Spleen (tissue), 13 donors: ENCODE measurements at regions of chr22 and their contacts with region 1.

Region 1: DNA sequence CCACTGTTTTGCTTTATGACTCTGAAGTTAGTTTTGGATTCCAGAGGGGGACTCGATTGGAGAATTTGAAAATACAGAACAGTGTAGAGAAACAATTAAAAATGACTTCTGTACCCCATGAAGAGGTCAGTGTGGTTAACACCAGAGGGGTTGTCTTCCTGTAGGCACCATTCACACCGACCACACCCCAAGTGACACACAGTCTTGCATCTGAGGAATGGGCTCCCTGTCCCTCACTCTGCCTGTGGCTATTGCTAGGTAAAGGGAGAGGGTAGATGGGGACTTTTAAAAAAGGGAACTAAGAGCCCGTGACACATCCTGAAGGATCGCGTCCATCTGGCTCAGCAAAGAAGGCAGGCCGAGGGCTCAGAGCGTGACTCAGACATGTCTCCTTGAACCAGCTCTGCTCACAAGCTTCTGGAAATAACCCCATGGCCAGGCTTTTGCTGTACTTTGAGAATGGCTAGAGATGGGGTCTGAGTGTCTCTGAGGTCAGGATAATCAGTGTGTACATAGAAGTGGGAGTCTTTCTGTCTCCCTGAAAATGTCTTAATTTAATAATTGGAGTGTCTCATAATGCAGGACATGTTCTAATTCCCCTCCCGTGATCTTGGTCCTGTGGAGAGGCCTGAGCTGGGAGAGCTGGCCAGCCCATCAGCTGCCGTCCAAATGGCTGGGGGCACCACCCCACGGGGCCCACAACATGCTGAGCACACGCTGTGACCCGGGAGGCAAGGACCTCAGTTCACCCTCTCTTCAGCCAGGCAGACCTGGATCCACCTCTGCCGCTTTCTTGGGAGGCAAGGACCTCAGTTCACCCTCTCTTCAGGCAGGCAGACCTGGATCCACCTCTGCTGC is 39.3 kb downstream of the SGSM1 start:
- DNase-seq: peak; percentile 49
- H3K4me3 ChIP-seq: no peak overlapping the region
- H3K27ac ChIP-seq: no peak overlapping the region
- H3K4me1 ChIP-seq: peaks cover 0 to 8% (median 0%) of the 10 kb centered on the region in 6 donors
- H3K27me3 ChIP-seq: peaks cover 0 to 4% (median 0%) of the 10 kb centered on the region in 7 donors
- CTCF ChIP-seq: no peak
- POLR2A ChIP-seq: no peak

Region 2: DNA sequence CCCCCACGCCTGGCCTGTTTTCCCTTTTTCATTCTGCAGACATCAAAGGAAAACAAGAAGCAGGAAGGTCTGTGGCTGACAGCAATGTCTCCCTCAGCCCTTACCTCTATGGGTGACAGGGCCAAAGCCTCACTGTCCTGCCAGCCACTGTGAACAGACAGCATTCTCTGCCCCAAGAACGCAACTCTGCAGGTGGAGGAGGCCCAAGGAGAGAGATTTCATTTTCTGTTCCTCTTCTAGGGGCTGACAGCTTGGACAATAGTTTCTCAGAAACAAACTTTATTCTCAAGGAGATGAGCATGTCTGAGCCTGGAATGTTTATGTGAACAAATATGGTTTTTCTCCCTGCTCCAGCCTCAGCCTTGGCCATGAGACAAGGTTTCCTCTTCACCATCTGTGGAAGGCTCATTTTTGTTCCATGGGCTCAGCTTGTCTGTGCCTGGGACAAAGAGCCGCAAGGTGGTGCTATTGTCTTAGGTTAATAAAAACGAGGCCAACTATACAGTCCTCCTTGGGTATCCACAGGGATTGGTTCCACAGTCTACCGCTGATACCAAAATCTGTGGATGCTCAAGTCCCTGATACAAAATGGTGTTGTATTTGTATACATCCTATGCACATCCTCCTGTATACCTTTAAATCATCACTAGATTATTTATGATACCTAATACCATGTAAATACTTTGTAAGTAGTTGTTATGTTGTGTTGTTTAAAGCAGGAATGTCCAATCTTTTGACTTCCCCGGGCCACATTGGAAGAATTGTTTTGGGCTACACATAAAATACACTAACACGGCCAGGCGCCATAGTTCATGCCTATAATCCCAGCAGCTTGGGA is 76.5 kb before region 1 on chr22:
- intact Hi-C with region 1: loop called (anchors 5 kb)
- DNase-seq: no peak
- H3K4me3 ChIP-seq: no peak overlapping the region
- H3K27ac ChIP-seq: no peak overlapping the region
- H3K4me1 ChIP-seq: no peaks in the 10 kb centered on the region
- H3K27me3 ChIP-seq: peaks cover 0 to 47% (median 5%) of the 10 kb centered on the region in 7 donors
- CTCF ChIP-seq: peak; percentile 40 to 82 (median 65)
- POLR2A ChIP-seq: no peak